A549 (cell line): ENCODE measurements at regions of chr16 and their contacts with region 1.

Region 1: DNA sequence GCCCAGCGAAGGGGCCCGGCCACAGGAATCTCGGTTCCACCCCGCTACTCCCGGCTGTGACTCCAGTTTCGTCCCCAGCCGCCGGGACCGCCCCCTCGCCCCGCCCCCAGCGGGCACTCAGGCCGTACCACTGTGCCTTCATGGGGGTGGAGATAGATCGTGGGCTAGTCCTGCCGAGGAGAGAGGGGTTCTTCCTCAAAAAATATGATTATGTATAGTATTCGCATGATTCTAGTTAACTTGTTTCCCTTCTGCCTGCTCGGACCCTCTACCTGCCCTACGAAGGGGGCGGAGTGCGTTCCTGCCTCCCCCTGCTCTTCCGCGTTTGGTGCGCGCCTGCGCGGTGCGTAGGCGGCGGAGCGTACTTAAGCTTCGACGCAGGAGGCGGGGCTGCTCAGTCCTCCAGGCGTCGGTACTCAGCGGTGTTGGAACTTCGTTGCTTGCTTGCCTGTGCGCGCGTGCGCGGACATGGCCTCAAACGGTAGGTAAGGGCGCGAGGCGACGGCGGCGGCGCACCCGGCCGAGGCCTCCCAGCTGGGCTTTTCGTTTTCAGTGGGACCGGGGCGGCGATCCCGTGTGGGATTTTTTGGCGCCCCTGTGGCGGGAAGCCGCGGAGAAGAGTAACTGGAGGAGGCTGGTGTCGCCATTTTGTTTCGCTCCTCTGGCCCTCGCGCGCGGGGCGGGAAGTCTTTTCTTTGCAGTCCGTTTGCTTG is at the start of gene FUS:
- DNase-seq: peak; percentile 91 to 93
- ATAC-seq: peak; percentile 75 to 77
- H3K4me3 ChIP-seq: peak within 1 kb of the TSS; percentile 68
- H3K27ac ChIP-seq: peak within 1 kb of the TSS; percentile 92 to 97
- H3K4me1 ChIP-seq: peaks cover 29% of the 10 kb centered on the region
- CTCF ChIP-seq: no peak
- EP300 ChIP-seq: no peak
- POLR2A ChIP-seq: peak; percentile 100
- RAD21 ChIP-seq: no peak
- polyA plus RNA-seq, gene FUS: 168 and 224 TPM in 2 replicates

Region 2: GRCh38 chr16:31117391-31118197 is 62.3 kb before region 1 on chr16 and contains the start of gene KAT8:
- CTCF ChIA-PET with region 1: no interaction called
- POLR2A ChIA-PET with region 1: interaction called, 27 read pairs
- DNase-seq: peak; percentile 96 to 98
- ATAC-seq: peak; percentile 96 to 97
- H3K4me3 ChIP-seq: peak within 1 kb of the TSS; percentile 57
- H3K27ac ChIP-seq: peak within 1 kb of the TSS; percentile 91 to 93
- H3K4me1 ChIP-seq: peaks cover 17% of the 10 kb centered on the region
- CTCF ChIP-seq: no peak
- EP300 ChIP-seq: no peak
- POLR2A ChIP-seq: peak; percentile 65
- RAD21 ChIP-seq: 0 out of 5 replicates have a peak, but pooled peaks of 1 of the 2 experiments have one; percentile 20
- polyA plus RNA-seq, gene KAT8: 42.2 and 52.9 TPM in 2 replicates

Region 3: DNA sequence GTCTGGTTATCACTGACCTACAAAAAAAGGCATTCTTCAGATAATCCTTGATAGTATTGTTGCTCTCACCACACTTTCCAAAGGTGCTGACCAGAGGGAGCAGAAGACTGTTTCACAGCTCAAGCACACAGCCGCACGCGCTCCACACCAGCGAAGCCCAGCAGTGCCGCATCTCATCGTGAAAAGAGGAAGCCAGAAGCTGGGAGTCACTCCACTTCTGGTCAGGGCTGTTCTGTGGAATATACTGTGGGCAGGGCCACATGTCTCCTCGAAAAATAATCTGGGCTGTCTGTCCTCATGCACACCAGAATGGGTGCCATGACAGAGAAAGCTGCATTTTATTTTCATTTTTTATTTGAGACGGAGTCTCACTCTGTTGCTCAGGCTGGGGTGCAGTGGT is 22.8 kb before region 1 on chr16:
- CTCF ChIA-PET with region 1: no interaction called
- POLR2A ChIA-PET with region 1: interaction called, 10 read pairs
- DNase-seq: no peak
- ATAC-seq: no peak
- H3K4me3 ChIP-seq: no peak overlapping the region
- H3K27ac ChIP-seq: no peak overlapping the region
- H3K4me1 ChIP-seq: no peaks in the 10 kb centered on the region
- CTCF ChIP-seq: no peak
- EP300 ChIP-seq: no peak
- POLR2A ChIP-seq: no peak
- RAD21 ChIP-seq: no peak

Region 4: DNA sequence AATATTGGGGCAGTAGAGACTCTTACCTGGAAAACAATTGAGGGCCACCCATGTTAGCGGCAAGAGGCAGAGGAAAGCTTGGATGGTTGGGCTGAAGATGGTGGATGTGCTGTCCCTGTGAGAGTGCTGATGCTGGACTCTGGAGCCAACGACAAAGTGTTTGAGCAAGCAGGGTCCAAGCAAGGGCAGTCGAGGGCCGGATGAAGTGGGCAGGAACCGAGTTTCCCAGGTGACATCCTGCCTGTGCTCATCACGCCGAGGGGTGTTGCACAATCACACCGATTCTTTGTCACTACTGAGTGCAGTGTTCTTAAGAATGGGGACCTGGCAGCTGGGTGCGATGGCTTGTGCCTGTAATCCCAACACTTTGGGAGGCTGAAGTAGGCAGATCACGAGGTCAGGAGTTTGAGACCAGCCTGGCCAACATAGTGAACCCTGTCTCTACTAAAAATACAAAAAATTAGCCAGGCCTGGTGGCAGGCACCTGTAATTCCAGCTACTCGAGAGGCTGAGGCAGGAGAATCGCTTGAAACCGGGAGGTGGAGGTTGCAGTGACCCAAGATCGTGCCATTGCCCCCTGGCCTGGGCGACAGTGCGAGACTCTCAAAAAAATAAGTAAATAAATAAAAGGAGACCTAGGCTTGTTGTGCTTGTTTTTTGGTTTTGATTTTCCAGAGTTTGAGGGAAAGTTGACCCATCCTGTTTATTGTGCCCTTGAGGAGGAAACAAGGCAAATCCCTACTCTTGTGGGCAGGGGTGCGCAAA is 16.6 kb after region 1 on chr16:
- CTCF ChIA-PET with region 1: interaction called, 5 read pairs
- POLR2A ChIA-PET with region 1: interaction called, 20 read pairs
- DNase-seq: no peak
- ATAC-seq: no peak
- H3K4me3 ChIP-seq: no peak overlapping the region
- H3K27ac ChIP-seq: no peak overlapping the region
- H3K4me1 ChIP-seq: peaks cover 15% of the 10 kb centered on the region
- CTCF ChIP-seq: no peak
- EP300 ChIP-seq: no peak
- POLR2A ChIP-seq: no peak
- RAD21 ChIP-seq: no peak

Region 5: DNA sequence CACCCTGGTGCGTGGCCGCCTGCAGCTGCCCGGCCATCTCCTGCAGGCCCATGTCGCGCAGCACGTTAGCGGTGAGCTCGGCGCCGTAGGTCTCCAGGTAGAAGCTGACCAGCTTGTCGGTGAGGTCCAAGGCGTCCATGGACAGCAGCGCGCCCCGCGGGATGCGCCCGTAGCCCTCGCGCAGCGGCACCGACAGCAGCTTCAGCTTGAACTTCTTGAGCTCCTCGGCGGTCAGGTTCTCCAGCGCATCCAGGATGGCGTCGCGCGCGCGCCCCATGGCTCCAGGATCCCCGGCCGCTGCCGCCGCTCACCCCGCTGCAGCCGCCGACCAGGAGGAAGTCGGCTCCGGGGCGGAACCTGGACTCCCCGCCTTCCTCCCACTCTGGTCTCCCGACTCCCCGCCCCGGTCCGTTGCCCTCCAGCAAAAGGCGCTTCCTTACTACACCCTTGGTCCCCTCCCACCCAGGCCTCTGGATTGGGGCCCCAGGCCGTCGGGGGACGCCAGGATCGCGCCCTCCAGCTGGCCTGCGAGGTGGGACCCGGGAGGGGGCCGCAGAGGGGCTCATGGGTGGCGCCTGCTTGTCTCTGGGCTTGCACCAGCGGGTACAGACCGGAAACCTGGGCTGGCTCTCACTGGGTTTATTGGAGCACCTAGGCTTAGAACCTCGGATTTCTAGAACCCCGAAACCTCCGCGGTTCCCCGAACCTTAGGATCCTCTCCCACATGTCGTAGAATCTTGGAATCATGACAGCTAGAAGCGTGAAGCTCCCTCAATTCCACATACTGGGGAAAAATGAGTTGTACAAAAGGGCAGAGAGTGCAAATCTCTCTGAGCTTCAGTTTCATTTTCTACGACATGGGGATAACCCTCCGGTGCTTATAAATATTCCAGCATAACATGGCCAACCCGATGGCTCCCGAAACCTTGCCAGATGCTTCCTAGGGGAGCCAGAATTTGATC is 22.8 kb after region 1 on chr16 and contains the start of gene PYCARD:
- CTCF ChIA-PET with region 1: no interaction called
- POLR2A ChIA-PET with region 1: interaction called, 20 read pairs
- DNase-seq: peak in 1 of 2 experiments; percentile 35
- ATAC-seq: peak; percentile 28 to 49
- H3K4me3 ChIP-seq: peak within 1 kb of the TSS; percentile 55
- H3K27ac ChIP-seq: peak within 1 kb of the TSS; percentile 69 to 81
- H3K4me1 ChIP-seq: peaks cover 32% of the 10 kb centered on the region
- CTCF ChIP-seq: no peak
- EP300 ChIP-seq: no peak
- POLR2A ChIP-seq: peak; percentile 51
- RAD21 ChIP-seq: no peak
- polyA plus RNA-seq, gene PYCARD: 16.1 and 20.0 TPM in 2 replicates

Region 6: DNA sequence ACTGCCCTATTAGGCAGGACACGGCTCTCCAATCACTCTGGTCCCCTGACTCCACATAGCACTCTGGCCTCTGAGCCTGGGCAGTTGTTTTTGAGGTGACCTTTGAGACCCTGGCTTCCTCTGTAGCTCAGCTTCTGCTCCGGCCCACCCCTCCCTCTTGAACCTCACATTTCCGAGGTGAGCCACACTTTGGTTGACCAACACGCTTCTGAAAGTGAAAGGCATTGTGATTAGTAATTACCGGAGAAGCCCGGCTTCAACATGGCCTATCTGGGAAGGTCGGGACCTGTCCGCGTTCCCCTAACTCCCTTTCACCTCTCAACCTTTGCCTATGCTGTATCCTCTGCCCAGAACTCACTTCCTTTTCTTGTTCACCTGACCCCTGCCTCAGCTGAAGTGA is 164.8 kb after region 1 on chr16:
- CTCF ChIA-PET with region 1: no interaction called
- POLR2A ChIA-PET with region 1: no interaction called
- DNase-seq: no peak
- ATAC-seq: no peak
- H3K4me3 ChIP-seq: no peak overlapping the region
- H3K27ac ChIP-seq: no peak overlapping the region
- H3K4me1 ChIP-seq: no peaks in the 10 kb centered on the region
- CTCF ChIP-seq: no peak
- EP300 ChIP-seq: no peak
- POLR2A ChIP-seq: no peak
- RAD21 ChIP-seq: no peak

Region 7: DNA sequence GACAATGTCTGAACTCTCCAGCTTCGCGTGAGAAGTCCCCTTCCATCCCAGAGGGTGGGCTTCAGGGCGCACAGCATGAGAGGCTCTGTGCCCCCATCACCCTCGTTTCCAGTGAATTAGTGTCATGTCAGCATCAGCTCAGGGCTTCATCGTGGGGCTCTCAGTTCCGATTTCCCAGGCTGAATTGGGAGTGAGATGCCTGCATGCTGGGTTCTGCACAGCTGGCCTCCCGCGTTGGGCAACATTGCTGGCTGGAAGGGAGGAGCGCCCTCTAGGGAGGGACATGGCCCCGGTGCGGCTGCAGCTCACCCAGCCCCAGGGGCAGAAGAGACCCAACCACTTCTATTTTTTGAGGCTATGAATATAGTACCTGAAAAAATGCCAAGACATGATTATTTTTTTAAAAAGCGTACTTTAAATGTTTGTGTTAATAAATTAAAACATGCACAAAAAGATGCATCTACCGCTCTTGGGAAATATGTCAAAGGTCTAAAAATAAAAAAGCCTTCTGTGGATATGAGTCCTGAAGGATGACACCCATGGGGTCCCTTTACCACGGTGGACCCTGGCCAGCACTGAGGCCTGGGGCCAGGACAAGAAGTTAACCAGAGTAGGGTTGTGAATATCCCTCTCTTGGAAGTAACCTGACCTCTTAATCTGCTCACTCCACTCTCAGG is 202.7 kb after region 1 on chr16:
- CTCF ChIA-PET with region 1: no interaction called
- POLR2A ChIA-PET with region 1: interaction called, 12 read pairs
- DNase-seq: peak; percentile 60 to 76
- ATAC-seq: peak; percentile 68 to 90; a peak in 5 of 6 replicates
- H3K4me3 ChIP-seq: no peak overlapping the region
- H3K27ac ChIP-seq: no peak overlapping the region
- H3K4me1 ChIP-seq: peaks cover 14% of the 10 kb centered on the region; the same call in 2 of the 3 replicates
- CTCF ChIP-seq: peak; percentile 70
- EP300 ChIP-seq: no peak
- POLR2A ChIP-seq: no peak
- RAD21 ChIP-seq: peak; percentile 61 to 68